A549 (cell line): ENCODE measurements at regions of chr14 and their contacts with region 1.

Region 1: DNA sequence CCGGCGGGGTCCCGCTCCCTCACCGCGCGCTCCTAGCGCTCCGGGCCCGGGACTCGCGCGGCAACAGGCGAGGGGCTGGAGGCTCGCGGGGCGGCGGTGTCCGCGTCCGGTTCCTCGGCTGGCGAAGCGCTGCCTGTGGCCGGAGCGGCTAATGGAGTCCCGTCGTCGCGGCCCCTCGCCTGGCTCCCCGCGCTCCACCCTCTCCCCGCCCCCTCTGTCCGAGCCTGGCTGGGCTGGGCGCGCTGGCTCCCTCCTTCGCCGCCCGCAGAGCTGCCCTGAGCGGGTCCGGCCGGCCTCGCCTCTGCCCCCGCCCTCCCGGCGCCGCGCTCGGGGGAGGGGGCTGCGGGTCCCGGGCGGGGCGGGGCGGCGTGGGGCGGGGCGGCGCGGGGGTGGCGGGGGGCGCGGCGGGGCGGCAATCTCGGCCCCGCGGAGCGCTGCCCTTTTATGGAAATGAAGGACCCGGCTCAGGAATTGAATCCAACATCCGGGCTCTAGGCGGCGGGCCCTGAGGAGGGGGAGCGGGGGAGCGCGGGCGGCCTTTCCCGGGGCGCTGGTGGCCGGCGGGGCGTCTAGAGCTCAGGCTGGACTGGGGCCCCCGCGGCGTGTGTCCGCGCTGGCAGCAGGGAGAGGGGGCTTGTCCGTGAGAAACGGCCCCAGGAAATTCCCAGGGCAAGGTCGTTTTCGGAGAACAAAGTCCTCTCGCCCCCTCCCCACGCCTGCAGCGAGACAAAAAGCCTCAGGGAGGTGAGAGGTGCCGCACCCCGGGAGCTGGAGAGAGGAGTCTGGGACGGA is at the start of gene FERMT2:
- DNase-seq: peak; percentile 78 to 86
- ATAC-seq: peak; percentile 91
- H3K4me3 ChIP-seq: peak within 1 kb of the TSS; percentile 87
- H3K27ac ChIP-seq: peak within 1 kb of the TSS; percentile 90 to 97
- H3K4me1 ChIP-seq: peaks cover 25% of the 10 kb centered on the region
- CTCF ChIP-seq: no peak
- EP300 ChIP-seq: no peak; a peak in 1 of 5 replicates
- POLR2A ChIP-seq: peak; percentile 97
- RAD21 ChIP-seq: peak in 1 of 2 experiments; percentile 36; a peak in 2 of 5 replicates
- polyA plus RNA-seq, gene FERMT2: 76.6 and 102 TPM in 2 replicates

Region 2: GRCh38 chr14:52791203-52792096 is 159.6 kb before region 1 on chr14 and contains the start of gene GNPNAT1:
- CTCF ChIA-PET with region 1: no interaction called
- POLR2A ChIA-PET with region 1: interaction called, 14 read pairs
- DNase-seq: peak; percentile 83 to 94
- ATAC-seq: peak; percentile 93 to 95
- H3K4me3 ChIP-seq: peak within 1 kb of the TSS; percentile 65
- H3K27ac ChIP-seq: peak within 1 kb of the TSS; percentile 92 to 96
- H3K4me1 ChIP-seq: peaks cover 19% of the 10 kb centered on the region
- CTCF ChIP-seq: no peak
- EP300 ChIP-seq: no peak
- POLR2A ChIP-seq: peak; percentile 90
- RAD21 ChIP-seq: no peak
- polyA plus RNA-seq, gene GNPNAT1: 56.9 and 74.3 TPM in 2 replicates

Region 3: GRCh38 chr14:52923902-52924575 is 27.1 kb before region 1 on chr14:
- CTCF ChIA-PET with region 1: interaction called, 3 read pairs
- POLR2A ChIA-PET with region 1: interaction called, 13 read pairs
- DNase-seq: peak in 1 of 2 experiments; percentile 33
- ATAC-seq: peak; percentile 72 to 78
- H3K4me3 ChIP-seq: no peak overlapping the region
- H3K27ac ChIP-seq: peak overlapping the region in 1 of 2 experiments; percentile 11; a peak in 1 of 6 replicates
- H3K4me1 ChIP-seq: peaks cover 89% of the 10 kb centered on the region
- CTCF ChIP-seq: peak; percentile 35
- EP300 ChIP-seq: no peak
- POLR2A ChIP-seq: no peak
- RAD21 ChIP-seq: peak; percentile 44; a peak in 3 of 5 replicates

Region 4: DNA sequence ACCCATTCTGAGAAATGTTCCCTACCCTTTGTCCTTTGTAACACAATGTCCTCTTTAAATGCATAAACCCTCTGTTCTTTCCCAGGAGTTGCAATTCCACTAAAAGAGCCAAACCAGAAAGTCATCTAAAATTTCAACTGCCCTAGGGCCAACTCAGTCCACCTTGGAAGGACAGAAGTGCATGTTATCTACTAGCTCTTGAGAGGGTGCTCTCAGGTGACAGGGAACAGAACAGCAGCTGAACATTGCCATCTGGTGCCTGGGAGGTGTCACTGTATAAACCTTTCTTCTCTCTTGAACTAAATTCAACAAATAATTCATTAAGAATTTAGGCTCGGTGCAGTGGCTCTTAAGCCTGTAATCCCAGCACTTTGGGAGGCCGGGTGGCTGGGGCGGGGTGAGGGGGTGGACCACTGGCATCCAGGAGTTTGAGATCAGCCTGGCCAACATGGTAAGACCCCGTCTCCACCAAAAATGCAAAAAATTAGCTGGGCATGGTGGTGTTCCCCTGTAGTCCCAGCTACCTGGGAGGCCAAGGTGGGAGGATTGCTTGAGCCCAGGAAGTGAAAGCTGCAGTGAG is 10.1 kb after region 1 on chr14:
- CTCF ChIA-PET with region 1: interaction called, 23 read pairs
- POLR2A ChIA-PET with region 1: interaction called, 4 read pairs
- DNase-seq: peak; percentile 73 to 80
- ATAC-seq: peak; percentile 81 to 96
- H3K4me3 ChIP-seq: no peak overlapping the region
- H3K27ac ChIP-seq: no peak overlapping the region; a peak in 1 of 6 replicates
- H3K4me1 ChIP-seq: no peaks in the 10 kb centered on the region
- CTCF ChIP-seq: peak; percentile 65
- EP300 ChIP-seq: no peak
- POLR2A ChIP-seq: no peak
- RAD21 ChIP-seq: peak; percentile 85 to 94